Breast epithelium (tissue), 4 donors: ENCODE measurements at regions of chr2 and their contacts with region 1.

Region 1: DNA sequence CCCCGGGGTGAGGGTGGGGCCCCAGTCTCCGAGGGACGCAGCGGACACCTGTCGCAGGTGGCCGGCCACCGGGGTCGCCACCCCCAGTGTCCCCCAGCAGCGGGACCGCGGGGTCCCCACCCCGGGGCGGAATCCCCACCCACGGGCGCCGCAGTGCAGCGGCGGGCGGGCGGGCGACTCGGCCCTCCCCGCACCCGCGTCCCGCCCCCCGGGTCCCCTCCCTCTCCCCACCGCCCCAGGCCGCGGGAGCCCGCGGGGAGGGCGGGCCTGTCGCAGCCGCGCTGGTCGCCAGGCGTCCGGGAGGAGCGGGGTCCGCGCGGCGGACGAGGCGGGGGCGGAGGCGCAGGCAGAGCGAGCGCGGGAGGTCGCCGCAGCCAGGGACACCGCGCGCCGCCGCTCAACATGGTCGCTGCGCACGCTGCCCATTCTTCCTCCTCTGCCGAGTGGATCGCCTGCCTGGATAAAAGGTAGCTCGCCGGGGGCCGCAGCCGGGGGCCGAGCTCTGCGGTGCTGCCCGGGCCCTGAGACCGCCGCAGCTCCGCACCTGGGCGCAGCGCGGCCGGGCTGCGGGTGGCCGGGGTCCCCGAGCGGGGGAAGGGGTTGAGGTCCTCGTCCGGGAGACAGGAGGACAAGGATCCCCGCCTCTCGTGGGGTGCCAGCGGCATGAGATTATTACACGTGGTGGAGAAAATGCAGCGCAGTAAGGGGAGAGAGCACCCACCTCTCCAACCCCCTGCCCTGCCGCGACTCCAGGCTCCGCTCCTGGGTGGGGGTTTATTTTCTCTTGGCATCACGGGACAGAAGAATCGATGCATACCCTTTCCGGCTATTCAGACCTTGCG is at the start of gene RAPGEF4:
- DNase-seq: no peak
- H3K4me3 ChIP-seq: peak within 1 kb of the TSS; percentile 33 to 77 (median 61)
- H3K27ac ChIP-seq: no peak within 1 kb of the TSS
- H3K4me1 ChIP-seq: peaks cover 0 to 3% of the 10 kb centered on the region in 2 donors
- H3K27me3 ChIP-seq: peaks cover 0 to 15% of the 10 kb centered on the region in 2 donors
- CTCF ChIP-seq: no peak
- POLR2A ChIP-seq: no peak
- total RNA-seq, gene RAPGEF4: 7.7 to 12.8 (median 11.6) TPM

Region 2: GRCh38 chr2:172725746-172726145 is 10.1 kb before region 1 on chr2:
- intact Hi-C with region 1: loop called (anchors 1 kb)
- DNase-seq: no peak
- H3K4me3 ChIP-seq: no peak overlapping the region
- H3K27ac ChIP-seq: no peak overlapping the region
- H3K4me1 ChIP-seq: no peaks in the 10 kb centered on the region
- H3K27me3 ChIP-seq: no peaks in the 10 kb centered on the region
- CTCF ChIP-seq: no peak
- POLR2A ChIP-seq: no peak